PC-9 (cell line): ENCODE measurements at regions of chr12 and their contacts with region 1.

Region 1: DNA sequence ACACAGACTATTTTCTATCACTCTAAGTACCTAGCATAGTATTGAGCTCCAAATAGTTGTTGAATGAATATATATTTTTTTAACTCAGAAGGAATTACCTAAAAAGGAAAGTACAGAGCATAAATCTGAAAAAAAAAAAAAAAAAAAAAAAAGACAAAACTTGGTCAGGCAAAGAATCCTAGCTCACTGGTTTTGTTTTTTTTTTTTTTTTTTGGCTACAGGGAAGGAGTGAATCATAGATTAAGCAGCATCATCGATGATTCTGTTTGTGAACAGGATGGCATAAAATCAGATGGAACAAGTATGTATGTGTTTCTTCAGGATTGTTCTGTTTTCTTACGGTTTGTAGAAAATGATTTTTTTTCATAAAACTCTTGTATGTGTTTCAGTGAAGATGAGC is 66.1 kb upstream of the BCAT1 start:
- DNase-seq: no peak
- H3K4me3 ChIP-seq: no peak overlapping the region
- H3K27ac ChIP-seq: no peak overlapping the region
- H3K4me1 ChIP-seq: no peaks in the 10 kb centered on the region
- H3K27me3 ChIP-seq: no peaks in the 10 kb centered on the region
- CTCF ChIP-seq: no peak

Region 2: GRCh38 chr12:24997970-24998582 is 16.9 kb before region 1 on chr12:
- CTCF ChIA-PET with region 1: no interaction called
- POLR2A ChIA-PET with region 1: interaction called, 16 read pairs
- intact Hi-C with region 1: no loop called
- DNase-seq: no peak
- H3K4me3 ChIP-seq: no peak overlapping the region
- H3K27ac ChIP-seq: no peak overlapping the region
- H3K4me1 ChIP-seq: no peaks in the 10 kb centered on the region
- H3K27me3 ChIP-seq: no peaks in the 10 kb centered on the region
- CTCF ChIP-seq: no peak

Region 3: DNA sequence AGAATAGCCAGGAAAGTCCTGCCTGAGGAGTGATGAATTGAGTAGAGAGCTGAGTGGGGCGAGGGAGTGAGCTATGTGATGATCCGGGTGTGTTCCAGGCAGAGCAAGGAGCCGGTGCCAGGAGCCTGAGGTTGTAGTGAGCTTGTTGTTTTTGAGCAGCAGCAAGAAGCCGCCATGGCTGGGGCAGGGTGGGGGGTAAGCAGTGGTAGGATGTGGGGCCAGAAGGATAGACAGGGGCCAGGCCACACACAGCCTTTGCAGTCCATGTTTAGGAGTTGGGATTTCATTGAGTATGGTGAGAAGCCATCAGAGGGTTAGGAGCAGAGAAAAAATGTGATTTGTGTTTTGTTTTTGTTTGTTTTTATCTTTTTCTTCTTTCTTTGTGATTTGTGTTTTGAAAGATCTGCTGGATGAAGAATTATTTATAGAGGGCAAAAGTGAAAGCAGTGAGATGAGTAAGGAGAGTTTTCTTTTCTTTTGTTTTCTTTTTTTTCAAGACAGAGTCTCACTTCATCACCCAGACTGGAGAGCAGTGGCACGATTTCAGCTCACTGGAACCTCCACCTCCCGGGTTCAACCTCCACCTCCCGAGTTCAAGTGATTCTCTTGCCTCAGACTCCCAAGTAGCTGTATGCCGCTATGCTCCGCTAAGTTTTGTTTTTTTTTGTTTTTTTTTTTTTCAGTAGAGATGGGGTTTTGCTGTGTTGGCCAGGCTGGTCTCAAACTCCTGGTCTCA is 26.2 kb after region 1 on chr12:
- CTCF ChIA-PET with region 1: no interaction called
- POLR2A ChIA-PET with region 1: no interaction called
- intact Hi-C with region 1: no loop called
- DNase-seq: no peak
- H3K4me3 ChIP-seq: no peak overlapping the region
- H3K27ac ChIP-seq: no peak overlapping the region
- H3K4me1 ChIP-seq: no peaks in the 10 kb centered on the region
- H3K27me3 ChIP-seq: no peaks in the 10 kb centered on the region
- CTCF ChIP-seq: no peak

Region 4: GRCh38 chr12:25276199-25276937 is 261.4 kb after region 1 on chr12:
- CTCF ChIA-PET with region 1: no interaction called
- POLR2A ChIA-PET with region 1: no interaction called
- intact Hi-C with region 1: no loop called
- DNase-seq: peak; percentile 60 to 79
- H3K4me3 ChIP-seq: no peak overlapping the region
- H3K27ac ChIP-seq: peak overlapping the region; percentile 54
- H3K4me1 ChIP-seq: peaks cover 13% of the 10 kb centered on the region
- H3K27me3 ChIP-seq: no peaks in the 10 kb centered on the region
- CTCF ChIP-seq: no peak